ENCODE measurements at regions of chr5 and their contacts with region 1.

Region 1: DNA sequence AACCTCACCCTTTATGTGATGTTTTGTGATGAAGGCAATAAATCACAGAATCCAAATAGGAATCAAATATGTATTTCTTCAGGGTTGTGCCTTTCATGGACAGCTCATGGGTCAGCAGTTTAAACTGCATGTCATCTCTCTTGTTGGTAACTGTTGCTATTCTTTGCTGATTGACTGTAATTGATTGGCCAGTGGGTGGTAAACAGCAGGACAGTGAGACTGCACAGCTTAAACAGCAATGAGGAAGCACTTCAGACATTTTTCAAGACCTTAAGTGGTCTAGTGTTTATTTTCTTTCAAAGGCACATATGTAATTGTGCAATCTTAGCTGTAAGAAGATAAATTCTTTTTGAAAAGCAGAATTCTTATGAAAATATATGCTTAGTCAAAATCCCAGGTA is 260.5 kb downstream of the COX7C start:
- DNase-seq: no peak
- H3K4me3 ChIP-seq: no peak overlapping the region
- H3K27ac ChIP-seq: no peak overlapping the region
- H3K4me1 ChIP-seq: no peaks in the 10 kb centered on the region
- H3K27me3 ChIP-seq: no peaks in the 10 kb centered on the region; the same call in 1 of the 2 replicates

Region 2: DNA sequence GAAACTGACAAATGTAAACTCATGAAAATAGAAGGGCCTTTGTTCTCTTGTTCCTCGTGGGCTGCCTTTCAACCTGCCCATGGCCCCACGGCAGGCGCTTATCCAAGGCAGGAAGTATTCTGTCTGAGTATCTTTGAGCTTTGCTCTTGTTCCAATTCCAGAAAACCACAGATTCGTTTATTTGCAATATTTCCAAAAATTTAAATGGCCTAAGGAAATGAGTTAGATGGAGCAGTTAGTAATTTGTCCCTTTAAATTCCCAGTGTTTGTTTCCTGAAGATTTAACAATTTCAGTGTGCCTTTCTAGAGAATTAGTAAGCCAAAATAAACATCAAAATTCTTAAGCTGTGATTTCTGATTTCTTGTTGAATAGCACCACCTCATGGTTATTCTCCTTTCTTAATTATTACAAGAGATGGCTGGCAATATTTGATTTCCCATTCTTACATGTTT is 90.1 kb after region 1 on chr5:
- in situ Hi-C with region 1: loop called (anchors 10 kb)
- DNase-seq: peak; percentile 71
- H3K4me3 ChIP-seq: no peak overlapping the region
- H3K27ac ChIP-seq: no peak overlapping the region
- H3K4me1 ChIP-seq: peaks cover 10% of the 10 kb centered on the region
- H3K27me3 ChIP-seq: no peaks in the 10 kb centered on the region